Activated CD4-positive, alpha-beta memory T cell treated with anti-CD3 and anti-CD28 coated beads for 36 hours (primary cell): ENCODE measurements at regions of chr11 and their contacts with region 1.

Region 1: DNA sequence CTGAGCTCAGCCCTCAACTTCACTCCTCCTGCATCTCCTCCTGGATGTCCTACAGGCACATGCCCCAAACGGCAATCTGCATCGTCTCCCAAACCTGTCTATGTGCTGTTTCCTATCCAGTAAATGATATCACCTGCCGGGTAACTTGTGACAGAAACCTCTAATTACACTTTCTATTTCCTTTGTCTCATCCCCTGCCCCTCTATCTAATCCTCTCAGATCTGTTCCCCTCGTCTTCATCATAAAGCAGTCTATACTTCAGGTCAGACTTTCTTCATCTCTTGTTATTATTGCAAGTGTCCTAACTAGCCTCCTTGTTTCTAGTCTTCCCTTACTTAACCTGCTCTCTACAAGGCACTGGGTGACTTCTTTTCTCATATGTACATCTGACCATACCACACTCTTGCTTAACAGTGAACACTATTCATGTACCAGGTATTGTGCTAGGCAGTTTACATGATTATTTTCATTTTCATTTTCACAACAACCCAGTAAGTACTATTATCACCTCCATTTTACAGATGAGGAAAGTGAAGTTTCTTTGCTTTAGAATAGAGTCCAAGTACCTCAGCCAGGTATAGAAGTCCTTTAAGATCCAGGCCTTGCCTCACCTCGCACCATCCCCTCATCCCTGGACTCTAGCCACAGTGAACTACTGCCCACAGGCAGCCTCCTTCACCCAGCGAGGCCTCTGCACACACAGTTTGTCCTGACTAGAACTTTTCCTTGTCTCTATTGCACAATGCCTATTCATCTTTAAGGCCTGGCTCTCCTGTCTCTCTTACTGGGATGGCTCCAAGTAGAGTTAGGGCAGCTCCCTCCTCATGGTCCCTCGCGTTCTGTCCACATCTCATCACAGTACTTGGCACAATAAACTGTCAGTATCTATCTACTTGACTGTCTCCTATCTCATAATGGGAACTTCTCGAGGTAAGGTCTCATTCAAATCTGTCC is 22.1 kb upstream of the UCP3 start:
- DNase-seq: no peak
- H3K4me3 Mint-ChIP-seq: peak overlapping the region; percentile 57
- H3K27ac Mint-ChIP-seq: peak overlapping the region; percentile 77
- H3K4me1 Mint-ChIP-seq: peaks cover 41% of the 10 kb centered on the region
- H3K27me3 Mint-ChIP-seq: no peaks in the 10 kb centered on the region

Region 2: GRCh38 chr11:74069147-74070047 is 38.4 kb after region 1 on chr11:
- CTCF ChIA-PET with region 1: no interaction called
- POLR2A ChIA-PET with region 1: no interaction called
- intact Hi-C with region 1: loop called (anchors 5 kb)
- DNase-seq: no peak
- H3K4me3 Mint-ChIP-seq: no peak overlapping the region
- H3K27ac Mint-ChIP-seq: no peak overlapping the region
- H3K4me1 Mint-ChIP-seq: peaks cover 8% of the 10 kb centered on the region
- H3K27me3 Mint-ChIP-seq: no peaks in the 10 kb centered on the region